H1 (cell line): ENCODE measurements at regions of chr16 and their contacts with region 1.

Region 1: DNA sequence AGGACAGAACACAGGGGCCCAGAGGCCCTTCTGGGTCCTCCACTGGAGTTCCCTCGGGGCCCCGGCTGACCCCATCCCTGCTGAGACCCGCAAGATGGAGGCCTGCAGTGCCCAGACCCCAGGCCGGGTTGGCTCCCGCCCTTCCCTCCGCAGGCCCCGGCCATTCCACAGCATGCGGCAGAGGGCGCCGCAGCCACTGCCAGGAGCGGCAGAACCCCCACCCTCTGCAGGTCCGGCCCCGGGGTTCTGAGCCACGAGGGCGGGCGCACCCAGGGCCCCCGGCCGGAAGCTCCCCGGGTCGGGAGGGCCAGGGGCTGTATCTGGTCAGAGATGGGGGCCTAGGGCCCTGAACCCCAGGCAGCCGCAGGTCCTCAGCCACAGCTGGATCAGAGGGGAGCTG is 2.4 kb upstream of the PERCC1 start:
- DNase-seq: peak in 1 of 2 experiments; percentile 85
- H3K4me3 ChIP-seq: no peak overlapping the region
- H3K27ac ChIP-seq: no peak overlapping the region
- H3K4me1 ChIP-seq: no peaks in the 10 kb centered on the region; a peak in 2 of 7 replicates
- H3K27me3 ChIP-seq: no peaks in the 10 kb centered on the region
- CTCF ChIP-seq: peak; percentile 53 to 66 (median 60)
- EP300 ChIP-seq: no peak
- POLR2A ChIP-seq: no peak
- RAD21 ChIP-seq: peak; percentile 48 to 66

Region 2: DNA sequence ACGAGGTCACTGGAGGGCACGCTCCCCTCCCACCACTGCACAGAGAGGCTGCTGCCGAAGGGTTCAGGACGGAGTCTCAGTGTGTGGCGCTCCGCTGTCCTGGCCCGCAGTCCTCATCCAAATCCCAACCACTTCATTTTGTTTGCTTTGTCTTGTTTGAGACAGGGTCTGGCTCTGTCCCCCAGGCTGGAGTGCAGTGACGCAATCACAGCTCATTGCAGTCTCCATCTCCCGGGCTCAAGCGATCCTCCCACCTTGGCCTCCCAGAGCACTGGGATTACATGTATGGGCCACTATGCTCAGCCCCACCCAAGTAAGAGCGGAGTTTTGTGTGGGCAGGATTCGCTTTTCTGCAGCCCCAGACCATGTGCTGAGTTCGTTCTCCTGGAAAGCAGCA is 26.8 kb before region 1 on chr16:
- CTCF ChIA-PET with region 1: no interaction called
- POLR2A ChIA-PET with region 1: no interaction called
- DNase-seq: no peak
- H3K4me3 ChIP-seq: no peak overlapping the region
- H3K27ac ChIP-seq: no peak overlapping the region
- H3K4me1 ChIP-seq: no peaks in the 10 kb centered on the region
- H3K27me3 ChIP-seq: no peaks in the 10 kb centered on the region
- CTCF ChIP-seq: no peak
- EP300 ChIP-seq: no peak
- POLR2A ChIP-seq: no peak
- RAD21 ChIP-seq: no peak

Region 3: GRCh38 chr16:1443403-1443973 is 15.0 kb after region 1 on chr16:
- CTCF ChIA-PET with region 1: interaction called, 30 read pairs
- POLR2A ChIA-PET with region 1: interaction called, 22 read pairs
- DNase-seq: no peak
- H3K4me3 ChIP-seq: no peak overlapping the region
- H3K27ac ChIP-seq: no peak overlapping the region
- H3K4me1 ChIP-seq: no peaks in the 10 kb centered on the region; a peak in 1 of 7 replicates
- H3K27me3 ChIP-seq: no peaks in the 10 kb centered on the region
- CTCF ChIP-seq: no peak
- EP300 ChIP-seq: no peak
- POLR2A ChIP-seq: no peak
- RAD21 ChIP-seq: no peak